Transverse colon (tissue), 4 donors: ENCODE measurements at regions of chr5 and their contacts with region 1.

Region 1: DNA sequence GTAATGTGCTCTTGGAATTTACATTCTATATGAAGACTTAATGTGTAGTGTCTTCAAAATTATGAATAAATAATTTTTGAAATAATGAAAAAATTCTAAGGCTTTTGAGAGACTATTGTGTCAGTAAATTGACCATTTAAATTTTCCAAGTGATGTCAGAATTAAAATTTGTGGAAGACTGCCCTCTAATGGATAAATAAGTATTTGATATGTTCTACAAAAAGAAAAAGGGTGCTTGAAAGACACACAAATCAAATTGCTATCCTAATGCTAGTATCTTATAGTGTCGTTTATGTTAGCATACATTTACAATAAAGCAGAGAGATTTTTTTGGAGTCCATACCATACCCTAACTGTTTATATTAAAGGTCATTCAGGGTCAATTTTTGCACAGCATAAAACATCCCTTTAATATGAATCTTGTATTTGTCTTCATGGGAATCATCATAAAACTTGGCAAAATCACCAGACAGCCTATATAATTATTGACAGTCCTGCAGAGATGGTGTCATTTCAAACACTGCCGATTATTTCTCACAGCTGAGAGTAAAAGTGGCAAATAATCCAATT is 120.8 kb upstream of the SLC27A6 start:
- DNase-seq: no peak
- H3K4me3 ChIP-seq: no peak overlapping the region
- H3K27ac ChIP-seq: no peak overlapping the region
- H3K4me1 ChIP-seq: no peaks in the 10 kb centered on the region
- H3K27me3 ChIP-seq: no peaks in the 10 kb centered on the region
- CTCF ChIP-seq: peak in 3 of 5 experiments; percentile 14 to 25 (median 16)
- EP300 ChIP-seq: no peak
- POLR2A ChIP-seq: no peak

Region 2: DNA sequence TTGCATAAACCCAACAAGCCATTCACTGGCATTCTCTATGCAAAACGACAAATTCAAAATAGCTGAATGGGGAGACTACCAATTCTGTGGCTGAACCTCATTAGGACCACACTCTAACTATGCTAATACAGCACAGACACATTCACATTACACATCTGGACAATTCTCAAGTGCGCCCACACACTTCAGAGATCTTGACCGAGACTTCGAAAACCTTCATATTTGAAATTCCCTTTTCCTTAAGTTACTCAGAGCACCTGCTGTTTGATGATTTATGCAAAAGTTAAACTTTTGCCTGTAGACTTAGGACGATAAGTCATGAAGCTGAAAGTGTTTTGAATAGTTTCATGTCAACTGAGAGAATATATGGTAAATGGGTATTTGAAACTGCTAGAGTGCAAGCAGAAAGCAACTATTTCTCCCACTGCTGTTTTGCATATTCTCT is 418.3 kb before region 1 on chr5:
- in situ Hi-C with region 1: no loop called
- intact Hi-C with region 1: no loop called
- DNase-seq: no peak
- H3K4me3 ChIP-seq: no peak overlapping the region
- H3K27ac ChIP-seq: no peak overlapping the region
- H3K4me1 ChIP-seq: no peaks in the 10 kb centered on the region
- H3K27me3 ChIP-seq: no peaks in the 10 kb centered on the region
- CTCF ChIP-seq: no peak
- EP300 ChIP-seq: no peak
- POLR2A ChIP-seq: no peak

Region 3: DNA sequence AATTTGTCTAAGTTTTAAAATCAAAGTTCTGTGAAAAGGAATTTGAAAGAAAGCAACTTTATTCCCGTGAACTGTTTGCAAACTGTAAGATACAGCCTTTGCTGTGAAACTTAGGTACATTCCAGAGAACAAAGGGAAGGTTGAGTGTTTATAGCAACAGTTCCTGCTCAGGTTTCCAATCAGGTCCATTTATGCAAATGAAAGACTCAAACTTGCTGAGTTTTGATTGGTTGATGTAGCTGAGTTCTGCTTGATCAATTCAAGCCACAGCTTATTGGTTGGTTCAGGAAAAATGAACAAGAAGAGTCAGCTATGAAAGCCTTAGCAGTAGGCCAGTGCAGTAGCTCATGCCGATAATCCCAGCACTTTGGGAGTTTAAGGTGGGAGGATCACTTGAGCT is 158.8 kb after region 1 on chr5:
- in situ Hi-C with region 1: no loop called
- intact Hi-C with region 1: loop called (anchors 10 kb)
- DNase-seq: no peak
- H3K4me3 ChIP-seq: no peak overlapping the region
- H3K27ac ChIP-seq: no peak overlapping the region
- H3K4me1 ChIP-seq: no peaks in the 10 kb centered on the region
- H3K27me3 ChIP-seq: no peaks in the 10 kb centered on the region
- CTCF ChIP-seq: no peak
- EP300 ChIP-seq: no peak
- POLR2A ChIP-seq: no peak